T-cell (primary cell): ENCODE measurements at regions of chr11 and their contacts with region 1.

Region 1: GRCh38 chr11:107573438-107573837 is 7.9 kb upstream of the ALKBH8 start:
- DNase-seq: no peak
- ATAC-seq: no peak
- H3K4me3 ChIP-seq: no peak overlapping the region
- H3K4me3 Mint-ChIP-seq: no peak overlapping the region
- H3K27ac ChIP-seq: no peak overlapping the region
- H3K27ac Mint-ChIP-seq: no peak overlapping the region
- H3K4me1 ChIP-seq: no peaks in the 10 kb centered on the region
- H3K4me1 Mint-ChIP-seq: no peaks in the 10 kb centered on the region
- H3K27me3 ChIP-seq: peaks cover 0 to 8% of the 10 kb centered on the region in 2 experiments
- H3K27me3 Mint-ChIP-seq: peaks cover 4% of the 10 kb centered on the region in 2 donors

Region 2: DNA sequence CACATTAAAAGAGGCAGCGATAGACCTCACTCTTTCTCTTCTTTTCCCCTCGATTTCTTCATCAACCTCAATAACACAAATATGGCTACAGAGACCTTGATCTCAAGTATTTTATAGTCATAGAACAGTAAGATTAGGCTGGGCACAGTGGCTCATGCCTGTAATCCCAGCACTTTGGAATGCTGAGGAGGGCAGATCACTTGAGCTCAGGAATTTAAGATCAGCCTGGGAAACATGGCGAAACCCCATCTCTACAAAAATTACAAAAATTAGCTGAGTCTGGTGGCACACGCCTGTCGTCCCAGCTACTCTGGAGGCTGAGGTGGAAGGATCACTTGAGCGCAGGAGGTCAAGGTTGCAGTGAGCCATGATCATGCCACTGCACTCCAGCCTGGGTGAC is 123.9 kb after region 1 on chr11:
- CTCF ChIA-PET with region 1: interaction called in 1 of 2 experiments, 14 read pairs
- POLR2A ChIA-PET with region 1: no interaction called
- DNase-seq: no peak
- ATAC-seq: no peak
- H3K4me3 ChIP-seq: no peak overlapping the region
- H3K4me3 Mint-ChIP-seq: no peak overlapping the region
- H3K27ac ChIP-seq: no peak overlapping the region
- H3K27ac Mint-ChIP-seq: no peak overlapping the region
- H3K4me1 ChIP-seq: no peaks in the 10 kb centered on the region
- H3K4me1 Mint-ChIP-seq: no peaks in the 10 kb centered on the region
- H3K27me3 ChIP-seq: peaks cover 0 to 13% of the 10 kb centered on the region in 2 experiments
- H3K27me3 Mint-ChIP-seq: peaks cover 26 to 27% of the 10 kb centered on the region in 2 donors